ENCODE measurements at regions of chr16 and their contacts with region 1.

Region 1: GRCh38 chr16:9033125-9033830 is 58.2 kb upstream of the HAPSTR1 start:
- DNase-seq: peak; percentile 71
- ATAC-seq: peak; percentile 73; the same call in 1 of the 2 replicates
- H3K4me3 ChIP-seq: no peak overlapping the region
- H3K27ac ChIP-seq: no peak overlapping the region
- H3K4me1 ChIP-seq: no peaks in the 10 kb centered on the region
- H3K27me3 ChIP-seq: peaks cover 2% of the 10 kb centered on the region; the same call in 1 of the 2 replicates
- CTCF ChIP-seq: peak; percentile 57
- POLR2A ChIP-seq: no peak
- RAD21 ChIP-seq: peak; percentile 49

Region 2: GRCh38 chr16:8928467-8928957 is 104.8 kb before region 1 on chr16:
- CTCF ChIA-PET with region 1: no interaction called
- POLR2A ChIA-PET with region 1: no interaction called
- dilution Hi-C with region 1: no loop called
- in situ Hi-C with region 1: no loop called
- intact Hi-C with region 1: loop called (anchors 10 kb)
- DNase-seq: peak; percentile 60
- ATAC-seq: peak; percentile 63
- H3K4me3 ChIP-seq: no peak overlapping the region
- H3K27ac ChIP-seq: no peak overlapping the region
- H3K4me1 ChIP-seq: peaks cover 2% of the 10 kb centered on the region; the same call in 1 of the 2 replicates
- H3K27me3 ChIP-seq: no peaks in the 10 kb centered on the region
- CTCF ChIP-seq: no peak
- POLR2A ChIP-seq: no peak
- RAD21 ChIP-seq: no peak

Measured in IMR-90 (cell line).